ENCODE measurements at regions of chr9 and their contacts with region 1.

Region 1: DNA sequence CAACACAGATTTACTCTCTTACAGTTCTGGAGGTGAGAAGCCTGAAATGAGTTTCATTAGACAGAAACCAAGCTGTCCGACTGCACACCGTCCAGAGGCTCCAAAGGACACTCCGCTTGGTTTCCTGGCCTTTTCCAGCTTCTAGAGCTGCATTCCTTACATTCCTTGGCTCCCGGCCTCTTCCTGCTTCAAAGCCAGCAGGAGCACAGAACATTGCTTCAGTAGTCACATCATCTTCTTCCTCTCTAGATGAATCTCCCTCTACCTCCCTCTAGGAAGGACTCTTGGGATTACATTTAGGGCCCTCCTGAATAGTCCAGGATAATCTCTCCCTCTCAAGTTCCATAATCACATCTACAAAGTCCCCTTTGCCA is 213.3 kb downstream of the CDK5RAP2 start:
- DNase-seq: peak; percentile 88
- ATAC-seq: peak; percentile 96
- H3K4me3 ChIP-seq: peak overlapping the region; percentile 3 to 27 (median 5); a peak in 1 of 6 replicates
- H3K27ac ChIP-seq: peak overlapping the region; percentile 47
- H3K4me1 ChIP-seq: peaks cover 29% of the 10 kb centered on the region
- H3K27me3 ChIP-seq: no peaks in the 10 kb centered on the region
- CTCF ChIP-seq: peak; percentile 35; the same call in 1 of the 2 replicates
- EP300 ChIP-seq: peak in 1 of 2 experiments; percentile 52; a peak in 2 of 4 replicates
- POLR2A ChIP-seq: peak in 1 of 2 experiments; percentile 41; a peak in 1 of 4 replicates
- RAD21 ChIP-seq: peak; percentile 38

Region 2: DNA sequence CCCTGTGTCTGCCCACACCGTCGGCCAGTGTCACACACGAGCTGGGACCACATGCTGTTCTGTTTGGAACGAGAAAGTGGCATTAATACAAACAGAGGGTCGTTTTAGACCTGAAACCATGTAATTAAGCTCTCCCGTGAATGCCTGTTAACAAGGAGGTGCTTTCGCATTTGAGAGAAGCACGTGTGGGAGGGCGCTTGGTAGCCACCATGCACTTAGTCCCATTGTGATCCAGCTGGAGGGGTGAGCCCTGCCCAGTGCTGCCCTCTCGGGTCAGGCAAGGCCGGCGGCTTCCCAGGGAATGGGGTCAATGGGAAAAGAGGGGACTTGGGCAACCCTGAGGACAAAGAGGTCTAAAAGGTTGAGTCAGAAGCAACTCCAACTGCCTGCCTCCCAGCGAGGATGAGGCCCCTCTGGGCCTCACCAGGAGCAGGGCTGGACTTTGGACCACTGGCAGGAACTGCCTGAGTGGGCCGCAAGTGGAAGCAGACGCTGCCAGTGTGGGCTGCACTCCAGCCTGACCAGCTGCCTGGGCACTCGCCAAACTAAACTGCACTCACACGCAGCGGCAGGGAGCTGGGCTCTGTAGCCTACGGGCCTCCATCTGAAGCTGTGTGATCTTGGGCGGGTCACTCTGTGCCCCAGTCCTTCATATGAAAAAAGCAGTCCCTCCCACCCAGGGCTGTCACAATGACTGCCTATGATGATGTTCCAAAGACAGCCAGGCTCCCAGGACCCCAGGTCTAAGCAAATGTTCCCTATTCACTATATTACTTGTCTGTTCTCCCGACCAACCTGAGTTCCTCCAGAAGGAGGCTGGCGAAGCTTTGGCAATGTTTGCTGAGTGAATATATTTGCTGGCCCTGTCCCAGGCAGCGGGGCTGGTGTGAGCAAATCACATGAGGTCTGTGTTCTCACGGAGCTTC is 17.6 kb after region 1 on chr9:
- CTCF ChIA-PET with region 1: interaction called, 4 read pairs
- POLR2A ChIA-PET with region 1: interaction called, 20 read pairs
- in situ Hi-C with region 1: no loop called
- intact Hi-C with region 1: loop called (anchors 1 kb)
- DNase-seq: peak; percentile 93
- ATAC-seq: peak; percentile 73
- H3K4me3 ChIP-seq: peak overlapping the region in 2 of 3 experiments; percentile 14 to 63; a peak in 4 of 6 replicates
- H3K27ac ChIP-seq: peak overlapping the region; percentile 94
- H3K4me1 ChIP-seq: peaks cover 67% of the 10 kb centered on the region
- H3K27me3 ChIP-seq: no peaks in the 10 kb centered on the region
- CTCF ChIP-seq: peak; percentile 66
- EP300 ChIP-seq: peak in 1 of 2 experiments; percentile 84; a peak in 3 of 4 replicates
- POLR2A ChIP-seq: peak in 1 of 2 experiments; percentile 91; a peak in 2 of 4 replicates
- RAD21 ChIP-seq: peak; percentile 64; the same call in 1 of the 2 replicates

Region 3: GRCh38 chr9:120438836-120439546 is 72.4 kb after region 1 on chr9:
- CTCF ChIA-PET with region 1: interaction called, 3 read pairs
- POLR2A ChIA-PET with region 1: no interaction called
- in situ Hi-C with region 1: no loop called
- intact Hi-C with region 1: loop called (anchors 2 kb)
- DNase-seq: peak; percentile 17
- ATAC-seq: peak; percentile 95
- H3K4me3 ChIP-seq: no peak overlapping the region
- H3K27ac ChIP-seq: no peak overlapping the region
- H3K4me1 ChIP-seq: no peaks in the 10 kb centered on the region
- H3K27me3 ChIP-seq: no peaks in the 10 kb centered on the region
- CTCF ChIP-seq: peak; percentile 73
- EP300 ChIP-seq: no peak
- POLR2A ChIP-seq: no peak
- RAD21 ChIP-seq: peak; percentile 35; the same call in 1 of the 2 replicates

Region 4: GRCh38 chr9:120531683-120532300 is 165.2 kb after region 1 on chr9:
- CTCF ChIA-PET with region 1: no interaction called
- POLR2A ChIA-PET with region 1: no interaction called
- in situ Hi-C with region 1: no loop called
- intact Hi-C with region 1: no loop called
- DNase-seq: peak; percentile 25
- ATAC-seq: peak; percentile 85
- H3K4me3 ChIP-seq: no peak overlapping the region
- H3K27ac ChIP-seq: no peak overlapping the region
- H3K4me1 ChIP-seq: no peaks in the 10 kb centered on the region; the same call in 1 of the 2 replicates
- H3K27me3 ChIP-seq: no peaks in the 10 kb centered on the region
- CTCF ChIP-seq: peak; percentile 54
- EP300 ChIP-seq: no peak
- POLR2A ChIP-seq: no peak
- RAD21 ChIP-seq: 0 out of 2 replicates have a peak, but pooled peaks have one; percentile 10

Measured in HepG2 (cell line).